ENCODE measurements at regions of chr5 and their contacts with region 1.

Region 1: DNA sequence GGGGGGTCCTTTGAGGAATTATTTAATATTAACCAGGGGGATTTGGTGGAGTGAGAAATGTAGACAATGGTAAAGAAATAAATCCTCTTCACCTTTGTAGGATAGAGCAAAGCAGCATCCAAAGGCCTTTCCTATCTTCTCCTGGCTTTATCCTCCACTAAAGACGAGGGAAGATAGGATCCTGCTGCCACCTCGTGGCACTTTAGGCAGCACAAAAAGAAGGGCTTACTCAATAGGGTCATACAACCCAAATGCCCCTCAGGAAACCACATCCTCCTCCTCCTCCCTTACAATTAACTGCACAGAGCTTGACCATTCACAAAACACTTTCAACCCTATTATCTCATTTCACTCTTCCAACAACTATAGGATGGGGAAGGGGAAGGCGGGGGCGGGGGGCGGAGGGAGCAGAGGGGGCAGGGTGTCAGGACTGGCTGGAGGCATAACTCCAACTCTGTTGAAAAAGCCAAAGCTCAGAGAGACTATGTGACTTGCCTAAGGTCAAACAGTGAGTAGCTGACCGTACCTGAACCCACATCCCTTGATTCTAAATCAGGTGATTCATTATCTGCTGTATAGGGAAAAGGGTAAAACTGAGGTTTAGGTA is 45.4 kb upstream of the MYOT start:
- DNase-seq: peak; percentile 29 to 64
- ATAC-seq: peak; percentile 84 to 97 (median 89)
- H3K4me3 ChIP-seq: no peak overlapping the region
- H3K27ac ChIP-seq: peak overlapping the region; percentile 58
- H3K4me1 ChIP-seq: peaks cover 3% of the 10 kb centered on the region
- H3K27me3 ChIP-seq: no peaks in the 10 kb centered on the region
- CTCF ChIP-seq: peak; percentile 52

Region 2: GRCh38 chr5:137629646-137630045 is 192.6 kb before region 1 on chr5:
- intact Hi-C with region 1: loop called (anchors 10 kb)
- DNase-seq: no peak
- ATAC-seq: peak; percentile 65 to 88 (median 78)
- H3K4me3 ChIP-seq: no peak overlapping the region
- H3K27ac ChIP-seq: no peak overlapping the region
- H3K4me1 ChIP-seq: no peaks in the 10 kb centered on the region
- H3K27me3 ChIP-seq: no peaks in the 10 kb centered on the region
- CTCF ChIP-seq: peak; percentile 95

Region 3: GRCh38 chr5:137660349-137660817 is 161.9 kb before region 1 on chr5:
- intact Hi-C with region 1: loop called in 1 of 2 experiments (anchors 2 kb)
- DNase-seq: peak; percentile 57 to 59
- ATAC-seq: peak; percentile 75 to 92 (median 84)
- H3K4me3 ChIP-seq: no peak overlapping the region
- H3K27ac ChIP-seq: no peak overlapping the region
- H3K4me1 ChIP-seq: peaks cover 4% of the 10 kb centered on the region
- H3K27me3 ChIP-seq: no peaks in the 10 kb centered on the region
- CTCF ChIP-seq: peak; percentile 76

Region 4: DNA sequence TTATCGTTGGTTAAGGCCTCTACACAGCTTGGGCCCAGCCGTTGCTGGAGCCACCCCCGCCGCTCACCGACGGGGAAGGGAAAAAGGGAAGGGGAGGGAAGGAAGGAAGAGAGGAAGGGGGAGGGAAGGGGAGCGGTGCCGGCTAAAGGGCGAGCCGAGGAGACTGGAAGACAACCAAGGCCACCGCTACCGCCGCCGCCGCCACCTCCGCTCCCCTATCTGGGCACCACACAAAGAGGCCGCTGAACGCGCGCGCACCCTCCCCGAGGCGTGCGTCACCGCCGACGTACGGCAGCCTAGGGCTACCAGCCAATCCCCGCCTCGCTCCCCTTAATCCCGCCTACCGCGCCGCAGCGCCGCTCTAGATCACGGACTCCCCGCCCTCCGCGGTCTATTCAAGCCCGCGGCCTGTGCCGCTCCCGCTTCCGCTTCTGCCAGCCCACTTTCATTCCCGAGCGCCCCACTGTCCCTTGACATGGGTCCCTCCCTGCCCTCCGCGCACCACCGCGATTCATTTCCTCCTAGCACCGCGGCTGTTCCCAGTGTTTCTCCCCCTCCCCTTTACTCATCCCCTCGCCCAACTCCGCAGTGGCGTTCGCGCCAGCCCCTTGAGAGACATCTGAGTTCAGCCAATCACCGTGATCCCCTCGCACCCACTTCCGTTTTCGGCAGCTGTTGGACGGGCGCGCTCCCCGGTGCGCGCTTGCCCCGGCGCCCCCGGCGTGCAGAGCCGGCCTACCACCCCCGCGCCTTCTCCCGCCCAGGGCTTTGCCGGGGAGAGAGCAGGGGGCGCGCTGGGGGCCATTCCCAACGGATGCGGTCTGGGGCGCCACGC is 67.9 kb before region 1 on chr5 and contains the start of gene HNRNPA0:
- intact Hi-C with region 1: loop called in 1 of 2 experiments (anchors 5 kb)
- DNase-seq: peak; percentile 96 to 98
- ATAC-seq: peak; percentile 94 to 95 (median 94)
- H3K4me3 ChIP-seq: peak within 1 kb of the TSS; percentile 95
- H3K27ac ChIP-seq: peak within 1 kb of the TSS; percentile 100
- H3K4me1 ChIP-seq: peaks cover 17% of the 10 kb centered on the region
- H3K27me3 ChIP-seq: no peaks in the 10 kb centered on the region
- CTCF ChIP-seq: peak; percentile 10
- total RNA-seq, gene HNRNPA0: 11.5 to 19.2 (median 17.6) TPM

Region 5: DNA sequence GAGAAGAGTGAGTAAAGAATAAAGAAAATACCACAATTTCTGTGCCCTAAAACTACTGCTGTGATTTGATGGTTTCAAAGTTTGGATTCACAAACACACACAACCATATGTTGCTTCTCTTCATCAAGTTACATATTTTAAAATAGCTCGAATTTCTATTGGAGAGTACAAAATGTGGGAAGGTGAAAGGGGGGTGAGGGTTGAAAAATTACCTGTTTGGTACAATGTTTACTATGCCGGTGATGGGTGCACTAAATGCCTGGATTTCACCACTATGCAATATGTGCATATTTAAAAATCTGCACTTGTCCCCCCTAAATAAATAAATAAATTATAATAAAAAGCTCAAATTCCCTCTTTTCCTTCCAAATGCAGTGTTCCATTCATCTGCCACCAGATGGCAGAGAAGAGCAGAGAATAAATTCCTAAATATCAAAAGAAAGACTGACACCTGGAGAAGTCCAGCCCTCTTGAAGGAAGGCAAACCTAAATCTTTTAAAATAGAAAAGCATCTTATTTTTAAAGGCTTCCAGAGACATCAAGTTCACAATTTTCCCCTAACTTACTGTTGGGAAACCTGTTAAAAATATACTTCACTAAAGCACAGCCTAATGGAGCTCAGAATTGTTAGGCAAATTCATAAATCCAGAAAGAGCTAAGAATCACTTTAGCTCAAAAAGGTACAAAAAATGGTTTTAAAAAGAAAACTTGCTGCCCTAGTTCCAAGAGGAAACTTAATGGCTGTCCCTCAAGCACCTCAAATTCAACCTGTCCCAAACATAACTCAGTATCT is 43.3 kb before region 1 on chr5:
- intact Hi-C with region 1: loop called (anchors 1 to 2 kb)
- DNase-seq: no peak
- ATAC-seq: peak in 2 of 4 donors; percentile 54 to 76
- H3K4me3 ChIP-seq: no peak overlapping the region
- H3K27ac ChIP-seq: no peak overlapping the region
- H3K4me1 ChIP-seq: peaks cover 8% of the 10 kb centered on the region
- H3K27me3 ChIP-seq: no peaks in the 10 kb centered on the region
- CTCF ChIP-seq: peak; percentile 90

Region 6: GRCh38 chr5:137939331-137939730 is 117.1 kb after region 1 on chr5:
- intact Hi-C with region 1: no loop called
- DNase-seq: no peak
- ATAC-seq: no peak
- H3K4me3 ChIP-seq: no peak overlapping the region
- H3K27ac ChIP-seq: no peak overlapping the region
- H3K4me1 ChIP-seq: no peaks in the 10 kb centered on the region
- H3K27me3 ChIP-seq: no peaks in the 10 kb centered on the region
- CTCF ChIP-seq: no peak

Region 7: DNA sequence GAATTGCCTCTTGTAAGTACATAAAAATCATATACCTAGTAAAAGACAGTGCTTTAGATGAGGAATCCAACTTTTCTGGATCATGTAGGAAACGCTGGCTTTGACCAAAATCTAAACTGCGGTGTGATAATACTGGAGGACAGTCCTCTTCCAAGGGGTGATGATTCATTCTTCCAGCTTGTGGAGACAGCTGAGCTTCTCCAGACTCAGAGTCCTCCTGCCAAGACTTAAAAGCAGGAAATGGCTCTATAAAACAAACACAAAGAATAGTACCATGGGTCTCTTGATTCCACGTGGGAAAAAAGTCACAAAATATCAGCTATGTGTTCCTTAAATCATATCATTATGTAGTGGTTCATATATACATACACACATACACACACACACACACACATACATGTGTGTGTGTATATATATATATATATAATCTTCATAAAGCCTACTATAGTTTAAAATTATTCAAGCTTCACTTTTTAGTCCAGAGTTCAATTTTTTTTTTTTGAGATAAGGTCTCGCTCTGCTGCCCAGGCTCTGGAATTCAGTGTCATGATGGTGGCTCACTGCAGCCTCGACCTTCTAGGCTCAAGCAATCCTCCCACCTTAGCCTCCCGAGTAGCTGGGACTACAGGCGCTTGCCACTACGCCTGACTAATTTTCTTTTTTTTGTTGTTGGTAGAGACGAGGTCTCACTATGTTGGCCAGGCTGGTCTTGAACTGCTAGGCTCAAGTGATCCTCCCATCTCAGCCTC is 132.0 kb after region 1 on chr5:
- intact Hi-C with region 1: no loop called
- DNase-seq: no peak
- ATAC-seq: peak; percentile 86 to 93 (median 92)
- H3K4me3 ChIP-seq: no peak overlapping the region
- H3K27ac ChIP-seq: peak overlapping the region; percentile 72
- H3K4me1 ChIP-seq: peaks cover 12% of the 10 kb centered on the region
- H3K27me3 ChIP-seq: no peaks in the 10 kb centered on the region
- CTCF ChIP-seq: no peak

Region 8: DNA sequence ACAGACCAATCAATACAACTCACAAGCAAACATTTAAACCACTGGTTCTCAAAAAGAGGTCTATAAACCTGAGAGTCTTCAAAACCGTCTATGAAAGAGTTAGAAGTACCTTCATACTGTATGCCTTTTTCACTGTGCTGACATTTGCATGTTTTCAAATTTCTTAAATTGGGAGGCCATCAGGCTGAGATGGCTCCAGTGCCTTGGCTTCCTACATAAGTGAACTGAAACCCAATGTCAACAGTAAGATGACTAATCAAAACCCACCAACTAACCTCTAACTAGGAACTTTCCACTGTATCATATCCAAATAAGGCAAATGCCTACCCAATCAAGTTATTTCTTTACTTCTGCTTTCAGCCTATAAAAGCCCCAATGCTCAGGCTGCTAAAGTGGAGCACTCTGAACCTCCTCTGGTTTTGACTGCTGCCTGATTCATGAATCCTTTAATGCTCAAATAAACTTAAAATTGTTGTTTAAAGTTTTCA is 175.5 kb after region 1 on chr5:
- intact Hi-C with region 1: no loop called
- DNase-seq: no peak
- ATAC-seq: no peak
- H3K4me3 ChIP-seq: no peak overlapping the region
- H3K27ac ChIP-seq: no peak overlapping the region
- H3K4me1 ChIP-seq: peaks cover 43% of the 10 kb centered on the region
- H3K27me3 ChIP-seq: no peaks in the 10 kb centered on the region
- CTCF ChIP-seq: no peak

Region 9: GRCh38 chr5:138011991-138012390 is 189.7 kb after region 1 on chr5:
- intact Hi-C with region 1: no loop called
- DNase-seq: no peak
- ATAC-seq: no peak
- H3K4me3 ChIP-seq: no peak overlapping the region
- H3K27ac ChIP-seq: no peak overlapping the region
- H3K4me1 ChIP-seq: no peaks in the 10 kb centered on the region
- H3K27me3 ChIP-seq: no peaks in the 10 kb centered on the region
- CTCF ChIP-seq: no peak